ENCODE measurements at regions of chr11 and their contacts with region 1.

Region 1: GRCh38 chr11:13210424-13210823 is 67.2 kb upstream of the BMAL1 start:
- DNase-seq: peak; percentile 46
- H3K4me3 Mint-ChIP-seq: no peak overlapping the region
- H3K27ac Mint-ChIP-seq: no peak overlapping the region
- H3K4me1 Mint-ChIP-seq: peaks cover 40% of the 10 kb centered on the region
- H3K27me3 Mint-ChIP-seq: no peaks in the 10 kb centered on the region

Region 2: GRCh38 chr11:12930850-12931249 is 279.6 kb before region 1 on chr11:
- CTCF ChIA-PET with region 1: no interaction called
- POLR2A ChIA-PET with region 1: no interaction called
- intact Hi-C with region 1: no loop called
- DNase-seq: no peak
- H3K4me3 Mint-ChIP-seq: no peak overlapping the region
- H3K27ac Mint-ChIP-seq: no peak overlapping the region
- H3K4me1 Mint-ChIP-seq: no peaks in the 10 kb centered on the region
- H3K27me3 Mint-ChIP-seq: peaks cover 5% of the 10 kb centered on the region

Region 3: DNA sequence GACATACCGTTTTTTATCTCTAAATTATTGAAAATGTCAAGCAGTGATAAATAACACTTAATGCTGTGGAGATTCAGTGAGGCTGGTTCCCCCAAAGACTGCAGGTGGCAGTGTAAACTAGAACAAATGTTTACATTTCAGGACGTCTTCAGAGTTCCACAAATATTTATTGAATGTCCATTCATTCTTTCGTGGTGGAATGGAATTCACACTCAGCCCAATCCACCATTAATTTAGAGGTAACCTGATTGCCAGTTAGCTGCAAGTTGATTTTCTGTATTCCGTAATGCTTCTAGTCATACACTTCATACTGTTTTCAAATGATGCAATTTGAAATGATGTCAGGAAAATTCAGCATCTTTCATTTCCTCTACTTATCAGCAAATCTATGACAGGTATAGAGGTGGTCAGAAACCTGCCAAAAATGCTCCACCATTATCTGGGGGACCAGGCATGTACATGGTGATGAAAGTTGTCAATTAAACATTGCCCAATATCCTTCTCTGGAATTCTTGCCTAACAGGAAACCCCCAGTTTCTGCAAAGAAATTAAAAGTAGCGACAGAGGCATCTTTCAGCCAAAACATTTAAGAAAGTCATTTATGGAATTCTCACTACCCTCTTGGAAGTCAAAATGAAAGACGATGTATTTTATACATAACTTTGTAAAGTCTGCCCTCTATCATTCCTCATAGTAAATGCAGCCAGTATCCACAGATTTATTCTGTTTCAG is 27.2 kb before region 1 on chr11:
- CTCF ChIA-PET with region 1: interaction called, 10 read pairs
- POLR2A ChIA-PET with region 1: no interaction called
- intact Hi-C with region 1: loop called (anchors 1 kb)
- DNase-seq: no peak
- H3K4me3 Mint-ChIP-seq: no peak overlapping the region
- H3K27ac Mint-ChIP-seq: no peak overlapping the region
- H3K4me1 Mint-ChIP-seq: peaks cover 7% of the 10 kb centered on the region
- H3K27me3 Mint-ChIP-seq: peaks cover 15% of the 10 kb centered on the region

Region 4: GRCh38 chr11:13276832-13277767 is 66.7 kb after region 1 on chr11:
- CTCF ChIA-PET with region 1: interaction called, 3 read pairs
- POLR2A ChIA-PET with region 1: no interaction called
- intact Hi-C with region 1: loop called (anchors 2 kb)
- DNase-seq: peak; percentile 98
- H3K4me3 Mint-ChIP-seq: peak overlapping the region; percentile 95
- H3K27ac Mint-ChIP-seq: peak overlapping the region; percentile 78
- H3K4me1 Mint-ChIP-seq: peaks cover 44% of the 10 kb centered on the region
- H3K27me3 Mint-ChIP-seq: peaks cover 7% of the 10 kb centered on the region

Region 5: DNA sequence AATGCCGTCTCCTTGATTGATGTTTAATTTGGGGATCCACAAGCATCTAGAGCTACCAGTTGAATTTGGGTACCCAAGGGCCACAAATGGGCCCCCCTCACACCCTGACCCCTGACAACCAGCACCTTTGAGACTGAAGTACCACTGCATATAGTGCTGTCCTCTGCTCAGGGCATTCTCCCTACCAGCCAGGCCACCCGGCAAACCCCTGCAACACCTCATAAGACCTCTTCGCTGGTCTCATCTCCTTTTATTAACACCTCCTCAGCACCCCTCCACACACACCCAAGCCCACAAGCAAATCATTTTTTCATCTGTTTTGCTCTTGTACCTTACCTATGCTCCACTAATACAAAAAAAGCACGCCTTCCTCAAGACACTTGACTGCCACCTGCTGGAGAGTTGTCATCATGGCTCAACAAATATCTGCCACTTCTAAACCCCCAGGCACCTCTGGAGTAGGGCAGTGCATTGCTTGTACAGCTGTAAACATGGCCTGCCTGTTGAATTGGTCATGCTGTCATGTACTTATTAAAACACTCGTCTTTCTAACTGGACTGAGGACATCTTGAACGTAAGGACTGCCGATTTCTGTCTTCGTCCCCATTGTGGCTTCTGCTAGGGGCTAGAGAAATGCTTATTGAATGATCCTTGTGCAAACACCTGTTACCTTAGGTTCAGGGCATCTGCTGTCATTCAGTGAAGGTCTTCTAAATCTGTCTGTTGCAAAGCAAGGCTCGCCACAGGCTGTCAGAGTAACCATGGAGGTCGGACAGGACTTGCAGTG is 133.7 kb after region 1 on chr11:
- CTCF ChIA-PET with region 1: interaction called, 42 read pairs
- POLR2A ChIA-PET with region 1: no interaction called
- intact Hi-C with region 1: loop called (anchors 1 kb)
- DNase-seq: peak; percentile 80
- H3K4me3 Mint-ChIP-seq: no peak overlapping the region
- H3K27ac Mint-ChIP-seq: no peak overlapping the region
- H3K4me1 Mint-ChIP-seq: peaks cover 43% of the 10 kb centered on the region
- H3K27me3 Mint-ChIP-seq: no peaks in the 10 kb centered on the region

Region 6: DNA sequence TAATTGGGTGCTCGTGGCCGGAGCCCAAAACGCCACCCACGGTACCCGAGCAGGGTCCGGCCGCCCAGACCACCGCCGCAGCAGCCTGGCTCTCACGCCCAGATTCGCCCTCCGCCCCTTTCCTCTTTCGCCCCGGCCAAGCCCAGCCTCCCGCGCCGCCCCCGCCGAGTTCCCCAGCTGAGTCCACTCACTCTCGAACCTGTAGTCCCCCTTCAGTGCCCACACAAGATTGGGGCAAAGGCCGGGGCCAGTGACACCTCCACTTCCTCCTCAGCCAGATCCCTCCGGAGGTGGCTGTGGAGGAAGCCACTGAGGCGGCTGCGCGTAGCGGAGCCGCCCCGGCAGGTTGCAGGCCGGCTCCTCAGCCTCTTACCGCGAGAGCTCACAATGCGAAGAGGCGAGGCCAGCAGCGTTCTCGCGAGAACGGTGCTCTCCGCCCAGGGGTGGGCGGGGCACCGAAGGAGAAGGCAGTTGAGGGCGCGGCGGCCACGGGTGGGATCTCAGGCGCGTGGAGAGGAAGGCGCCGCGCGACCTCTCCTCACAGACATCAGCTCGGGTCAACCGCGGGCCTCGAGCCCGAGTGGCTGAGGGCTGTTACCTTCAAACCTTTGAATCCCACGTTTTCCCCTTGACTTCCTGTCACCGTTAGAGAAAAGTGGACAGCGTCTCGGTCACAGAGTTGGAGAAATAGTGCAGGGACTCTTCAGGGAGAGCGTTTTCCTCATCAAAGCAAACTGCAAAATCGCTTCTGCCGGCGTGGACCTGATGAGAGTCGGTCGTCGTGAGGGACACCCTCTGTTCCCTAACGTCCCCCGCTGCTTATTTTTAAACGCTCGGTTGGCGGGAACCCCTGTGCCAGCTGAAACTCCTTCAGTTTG is 252.7 kb after region 1 on chr11 and contains the start of gene BTBD10:
- CTCF ChIA-PET with region 1: no interaction called
- POLR2A ChIA-PET with region 1: no interaction called
- intact Hi-C with region 1: loop called (anchors 2 kb)
- DNase-seq: peak; percentile 95
- H3K4me3 Mint-ChIP-seq: peak within 1 kb of the TSS; percentile 98
- H3K27ac Mint-ChIP-seq: peak within 1 kb of the TSS; percentile 95
- H3K4me1 Mint-ChIP-seq: peaks cover 35% of the 10 kb centered on the region
- H3K27me3 Mint-ChIP-seq: no peaks in the 10 kb centered on the region
- total RNA-seq, gene BTBD10: 22.3 to 24.3 TPM

Measured in activated CD4-positive, alpha-beta memory T cell treated with anti-CD3 and anti-CD28 coated beads for 36 hours (primary cell).